Activated naive CD4-positive, alpha-beta T cell treated with anti-CD3 and anti-CD28 coated beads for 36 hours (primary cell): ENCODE measurements at regions of chr9 and their contacts with region 1.

Region 1: GRCh38 chr9:6412487-6413364 is at the start of gene UHRF2:
- DNase-seq: peak; percentile 100
- H3K4me3 Mint-ChIP-seq: peak within 1 kb of the TSS; percentile 82
- H3K27ac Mint-ChIP-seq: peak within 1 kb of the TSS; percentile 95
- H3K4me1 Mint-ChIP-seq: peaks cover 29% of the 10 kb centered on the region
- H3K27me3 Mint-ChIP-seq: no peaks in the 10 kb centered on the region
- total RNA-seq, gene UHRF2: 62.7 to 71.5 TPM

Region 2: GRCh38 chr9:4662108-4662988 is 1750.4 kb before region 1 on chr9 and contains the start of gene PLPP6:
- CTCF ChIA-PET with region 1: no interaction called
- intact Hi-C with region 1: loop called (anchors 10 kb)
- DNase-seq: peak; percentile 91
- H3K4me3 Mint-ChIP-seq: peak within 1 kb of the TSS; percentile 87
- H3K27ac Mint-ChIP-seq: peak within 1 kb of the TSS; percentile 77
- H3K4me1 Mint-ChIP-seq: peaks cover 52% of the 10 kb centered on the region
- H3K27me3 Mint-ChIP-seq: no peaks in the 10 kb centered on the region
- total RNA-seq, gene PLPP6: 4.6 to 5.3 TPM

Region 3: DNA sequence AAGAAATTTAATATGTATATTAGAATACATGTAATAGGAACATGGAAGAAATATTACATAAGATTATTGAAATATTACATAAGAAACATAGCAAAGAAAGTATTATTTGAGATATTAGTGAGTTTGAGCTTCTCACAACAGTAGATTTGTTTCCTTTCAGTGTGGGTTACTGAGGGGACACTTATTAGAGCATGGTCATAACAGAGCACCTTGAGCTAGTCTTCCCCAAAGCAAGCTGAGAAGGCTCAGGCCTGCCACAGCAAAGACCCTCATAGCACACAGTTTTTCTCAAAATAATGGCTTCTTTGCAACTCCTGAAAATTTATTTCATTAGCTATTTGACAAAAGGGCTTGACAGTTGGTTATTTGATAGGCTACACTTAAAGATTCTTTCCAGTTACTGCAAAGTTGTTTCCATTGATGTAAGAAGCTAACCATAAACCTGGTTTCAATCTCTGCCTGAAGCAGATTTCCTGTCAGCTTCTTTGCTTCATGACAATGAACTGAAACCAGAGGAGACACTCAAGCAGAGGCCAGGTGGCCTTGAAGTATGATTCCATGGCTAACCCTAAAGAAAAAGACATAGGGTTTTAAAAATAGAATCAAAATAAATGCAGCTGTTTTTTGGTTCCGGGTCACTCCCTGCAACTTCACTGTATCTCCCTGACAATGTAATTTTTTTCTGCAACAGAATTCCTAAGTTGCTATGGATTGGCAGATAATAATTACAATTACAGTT is 648.4 kb before region 1 on chr9:
- CTCF ChIA-PET with region 1: no interaction called
- intact Hi-C with region 1: loop called (anchors 10 kb)
- DNase-seq: peak; percentile 55
- H3K4me3 Mint-ChIP-seq: no peak overlapping the region
- H3K27ac Mint-ChIP-seq: peak overlapping the region; percentile 83
- H3K4me1 Mint-ChIP-seq: peaks cover 72% of the 10 kb centered on the region
- H3K27me3 Mint-ChIP-seq: no peaks in the 10 kb centered on the region

Region 4: GRCh38 chr9:6008169-6008979 is 404.4 kb before region 1 on chr9:
- CTCF ChIA-PET with region 1: no interaction called
- intact Hi-C with region 1: loop called (anchors 1 kb)
- DNase-seq: peak; percentile 98
- H3K4me3 Mint-ChIP-seq: peak overlapping the region; percentile 76
- H3K27ac Mint-ChIP-seq: peak overlapping the region; percentile 82
- H3K4me1 Mint-ChIP-seq: peaks cover 61% of the 10 kb centered on the region
- H3K27me3 Mint-ChIP-seq: no peaks in the 10 kb centered on the region

Region 5: DNA sequence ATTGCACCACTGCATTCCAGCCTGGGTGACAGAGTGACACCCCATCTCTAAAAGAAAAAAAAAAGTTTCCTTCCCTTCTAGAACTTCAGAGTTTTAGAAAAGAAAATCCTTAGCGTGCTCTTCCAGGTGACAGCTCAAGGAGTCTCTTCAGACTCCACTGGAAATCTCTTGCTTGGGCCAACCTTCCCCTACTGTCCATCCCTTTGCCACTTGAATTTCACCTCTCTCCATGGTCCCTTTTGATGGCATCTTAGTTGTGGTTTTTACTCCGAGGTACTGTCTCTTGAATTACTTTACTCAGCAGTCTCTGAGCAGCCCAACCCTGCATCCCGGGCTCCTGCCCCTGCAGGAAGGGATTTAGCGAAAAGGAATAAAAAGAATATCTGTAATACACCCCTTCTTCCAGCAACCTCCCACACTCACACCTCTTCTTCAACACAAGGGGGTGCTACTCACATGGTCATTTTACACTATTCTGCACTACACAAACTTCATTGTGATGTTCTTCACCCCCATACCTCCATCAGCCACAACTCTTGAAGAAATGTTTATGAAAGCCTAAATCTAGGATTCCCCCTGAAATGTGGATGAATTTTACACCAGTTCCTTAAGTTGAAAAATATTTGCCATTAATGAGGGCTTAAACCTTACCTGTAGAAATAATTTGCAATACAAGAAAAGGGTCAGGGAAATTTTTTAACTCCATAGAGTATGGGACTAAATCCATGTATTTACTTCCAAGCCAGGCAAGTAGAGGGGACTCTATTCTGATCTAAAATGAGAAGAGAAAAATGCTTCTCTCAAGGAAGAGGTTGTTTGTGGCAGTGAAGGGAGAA is 58.7 kb before region 1 on chr9:
- CTCF ChIA-PET with region 1: interaction called, 19 read pairs
- intact Hi-C with region 1: loop called (anchors 1 kb)
- DNase-seq: peak; percentile 16
- H3K4me3 Mint-ChIP-seq: no peak overlapping the region
- H3K27ac Mint-ChIP-seq: no peak overlapping the region
- H3K4me1 Mint-ChIP-seq: peaks cover 10% of the 10 kb centered on the region
- H3K27me3 Mint-ChIP-seq: peaks cover 5% of the 10 kb centered on the region

Region 6: DNA sequence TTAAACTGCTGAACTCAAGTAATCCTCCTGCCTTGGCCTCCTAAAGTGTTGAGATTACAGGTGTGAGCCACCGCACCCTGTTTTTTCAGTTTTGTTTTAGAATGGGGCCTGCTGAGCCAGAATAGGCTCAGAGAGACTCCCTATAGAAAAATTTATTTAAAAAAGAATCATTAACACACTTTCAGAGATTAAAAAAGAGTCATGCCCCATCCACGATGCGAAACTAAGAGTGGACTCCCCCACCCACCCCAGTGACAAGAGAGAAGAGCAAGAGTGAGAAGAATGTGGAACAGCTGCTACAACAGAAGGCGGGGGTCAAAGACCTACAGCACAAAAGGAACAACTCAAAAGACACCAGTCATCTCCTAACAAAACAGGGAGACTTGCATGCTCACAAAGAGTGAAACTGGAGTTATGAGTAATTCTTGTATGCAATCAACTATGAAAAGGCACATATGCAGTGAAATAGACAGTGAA is 185.6 kb after region 1 on chr9:
- CTCF ChIA-PET with region 1: no interaction called
- intact Hi-C with region 1: loop called (anchors 1 kb)
- DNase-seq: peak; percentile 64
- H3K4me3 Mint-ChIP-seq: no peak overlapping the region
- H3K27ac Mint-ChIP-seq: peak overlapping the region; percentile 54
- H3K4me1 Mint-ChIP-seq: peaks cover 7% of the 10 kb centered on the region
- H3K27me3 Mint-ChIP-seq: no peaks in the 10 kb centered on the region